T-cell (primary cell): ENCODE measurements at regions of chr17 and their contacts with region 1.

Region 1: DNA sequence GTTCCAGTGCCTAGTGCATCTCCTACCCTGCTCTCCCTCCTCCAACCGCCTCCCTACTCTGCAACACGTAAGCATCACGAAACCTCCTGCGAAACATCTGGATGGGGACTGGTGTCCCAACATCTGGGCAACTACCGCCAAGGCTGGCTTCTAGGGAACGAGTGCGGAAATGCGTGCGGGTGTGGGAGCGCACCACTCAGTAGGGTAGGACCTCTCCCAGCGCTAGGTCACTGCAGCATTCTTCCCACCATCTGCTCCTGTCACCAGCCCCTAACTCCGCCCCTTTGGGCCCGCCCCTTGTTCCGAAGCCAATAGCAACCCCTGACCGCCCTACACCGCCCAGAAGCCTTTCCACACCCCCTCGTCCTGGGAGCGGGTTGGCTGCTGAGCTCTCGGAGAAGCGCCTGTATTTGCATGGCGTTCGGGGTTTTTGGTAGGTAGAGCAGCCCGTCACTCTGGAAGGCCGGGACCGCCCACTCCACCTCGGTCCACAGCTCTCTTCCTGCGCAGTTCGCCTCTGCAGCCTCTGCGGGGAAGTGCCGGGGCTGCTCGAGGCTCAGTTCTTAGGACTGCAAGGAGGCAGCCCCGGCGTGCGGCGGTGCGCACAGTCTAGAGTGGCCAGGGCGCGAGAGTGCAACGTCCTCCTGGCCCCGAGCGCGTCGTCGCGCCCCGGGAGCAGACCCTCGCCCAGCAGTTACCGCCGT is at the start of gene HS3ST3B1:
- DNase-seq: peak; percentile 96 to 100 (median 99)
- ATAC-seq: peak; percentile 80 to 85 (median 82)
- H3K4me3 ChIP-seq: peak within 1 kb of the TSS; percentile 93 to 94
- H3K4me3 Mint-ChIP-seq: peak within 1 kb of the TSS; percentile 92 to 98 (median 95)
- H3K27ac ChIP-seq: peak within 1 kb of the TSS; percentile 56
- H3K27ac Mint-ChIP-seq: peak within 1 kb of the TSS; percentile 94 to 97
- H3K4me1 ChIP-seq: peaks cover 25 to 74% of the 10 kb centered on the region in 2 experiments
- H3K4me1 Mint-ChIP-seq: peaks cover 60 to 67% (median 66%) of the 10 kb centered on the region in 3 donors
- H3K27me3 ChIP-seq: peaks cover 9 to 39% of the 10 kb centered on the region in 2 experiments
- H3K27me3 Mint-ChIP-seq: peaks cover 21 to 42% of the 10 kb centered on the region in 2 donors
- total RNA-seq, gene HS3ST3B1: 12.9 to 35.1 (median 25.1) TPM

Region 2: DNA sequence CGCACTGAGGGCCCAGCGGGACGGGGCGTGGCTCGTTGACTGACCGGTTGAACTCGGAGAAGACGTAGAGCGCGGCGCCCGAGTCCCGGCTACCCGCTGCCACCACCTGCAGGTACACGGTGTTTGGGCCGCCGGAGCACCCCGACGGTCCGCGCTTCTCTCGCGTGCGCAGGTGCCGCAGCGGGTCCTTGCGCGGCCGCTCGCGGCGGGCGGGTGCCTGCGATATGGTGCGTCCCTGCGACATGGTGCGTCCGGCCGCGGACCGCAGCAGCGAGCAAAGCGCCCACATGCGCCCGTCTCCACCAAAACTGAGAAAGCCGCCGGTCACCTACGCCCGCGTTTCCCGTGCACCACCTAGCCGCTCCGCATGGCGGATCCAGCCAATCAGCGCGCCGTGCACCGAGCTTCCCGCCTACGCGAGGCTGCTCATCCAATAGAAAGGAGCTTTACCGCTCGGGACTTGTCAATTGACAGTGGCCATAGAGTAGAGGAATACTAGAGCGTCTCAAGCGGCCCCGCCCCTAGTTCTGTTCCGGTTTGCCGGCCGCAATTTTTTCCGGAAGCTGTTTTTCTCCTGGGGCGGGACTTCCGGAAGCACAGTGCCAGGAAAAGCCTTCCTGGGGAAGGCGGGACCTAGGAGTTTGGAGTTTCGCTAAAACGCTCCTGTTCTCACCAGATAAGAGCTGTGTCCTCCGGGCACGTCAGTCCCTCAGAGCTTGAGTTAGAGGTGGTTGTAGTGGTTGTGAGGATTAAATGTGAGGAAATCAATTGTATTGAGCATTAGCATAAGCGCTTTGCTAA is 1282.9 kb before region 1 on chr17 and contains the start of gene ELAC2:
- CTCF ChIA-PET with region 1: interaction called in 1 of 2 experiments, 12 read pairs
- POLR2A ChIA-PET with region 1: no interaction called
- DNase-seq: peak; percentile 88 to 97 (median 93)
- ATAC-seq: peak; percentile 99 to 100 (median 100)
- H3K4me3 ChIP-seq: peak within 1 kb of the TSS; percentile 88 to 94
- H3K4me3 Mint-ChIP-seq: peak within 1 kb of the TSS; percentile 95 to 97 (median 97)
- H3K27ac ChIP-seq: peak within 1 kb of the TSS; percentile 63
- H3K27ac Mint-ChIP-seq: peak within 1 kb of the TSS; percentile 96 to 97
- H3K4me1 ChIP-seq: peaks cover 5 to 23% of the 10 kb centered on the region in 2 experiments
- H3K4me1 Mint-ChIP-seq: peaks cover 30 to 40% (median 38%) of the 10 kb centered on the region in 3 donors
- H3K27me3 ChIP-seq: no peaks in the 10 kb centered on the region
- H3K27me3 Mint-ChIP-seq: no peaks in the 10 kb centered on the region
- total RNA-seq, gene ELAC2: 62.5 to 71.6 (median 66.4) TPM

Region 3: DNA sequence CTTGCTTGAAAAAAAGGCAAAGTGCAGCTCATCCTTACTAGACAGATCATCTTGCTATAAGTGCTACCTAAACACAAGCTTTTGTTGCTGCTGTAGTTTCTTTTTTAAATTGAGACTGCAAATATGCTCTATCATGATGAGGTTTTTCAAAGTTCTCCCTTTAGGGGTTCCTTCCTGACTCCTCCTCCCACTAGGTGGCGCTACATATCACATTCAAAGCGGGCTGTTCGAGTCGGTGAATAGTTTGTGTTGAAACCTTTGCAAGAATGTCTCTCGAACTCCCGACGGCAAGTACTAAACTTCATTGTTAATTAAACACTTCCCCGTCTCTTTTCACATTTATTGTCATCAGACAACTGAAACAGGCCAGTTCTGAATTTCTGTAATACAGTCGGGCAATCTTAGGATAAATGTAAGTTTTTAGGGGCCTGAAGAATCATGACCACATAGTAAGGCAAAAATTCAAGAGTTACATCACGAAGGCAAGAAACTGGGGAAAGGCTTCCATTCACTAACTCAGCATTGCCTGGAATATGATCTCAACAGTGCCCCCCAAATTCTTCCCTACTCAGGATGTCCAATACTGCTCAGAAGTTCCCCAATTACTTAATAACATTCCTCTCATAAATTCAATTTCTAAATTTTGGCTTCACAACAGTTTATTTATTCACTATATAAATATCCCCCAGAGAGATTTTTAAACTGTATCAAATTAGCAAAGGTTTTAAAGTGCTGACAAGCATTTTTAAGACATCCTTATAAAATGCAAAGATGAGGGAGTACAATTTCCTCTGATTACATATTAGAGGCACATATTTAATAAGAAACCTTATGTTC is 705.7 kb before region 1 on chr17:
- CTCF ChIA-PET with region 1: interaction called, 4 to 34 read pairs
- POLR2A ChIA-PET with region 1: no interaction called
- DNase-seq: peak; percentile 40 to 89 (median 77)
- ATAC-seq: peak; percentile 72 to 81 (median 78)
- H3K4me3 ChIP-seq: no peak overlapping the region
- H3K4me3 Mint-ChIP-seq: no peak overlapping the region
- H3K27ac ChIP-seq: no peak overlapping the region
- H3K27ac Mint-ChIP-seq: peak overlapping the region in 1 of 2 donors; percentile 29
- H3K4me1 ChIP-seq: no peaks in the 10 kb centered on the region
- H3K4me1 Mint-ChIP-seq: peaks cover 5 to 7% (median 6%) of the 10 kb centered on the region in 3 donors
- H3K27me3 ChIP-seq: peaks cover 5 to 10% of the 10 kb centered on the region in 2 experiments
- H3K27me3 Mint-ChIP-seq: peaks cover 31 to 32% of the 10 kb centered on the region in 2 donors

Region 4: DNA sequence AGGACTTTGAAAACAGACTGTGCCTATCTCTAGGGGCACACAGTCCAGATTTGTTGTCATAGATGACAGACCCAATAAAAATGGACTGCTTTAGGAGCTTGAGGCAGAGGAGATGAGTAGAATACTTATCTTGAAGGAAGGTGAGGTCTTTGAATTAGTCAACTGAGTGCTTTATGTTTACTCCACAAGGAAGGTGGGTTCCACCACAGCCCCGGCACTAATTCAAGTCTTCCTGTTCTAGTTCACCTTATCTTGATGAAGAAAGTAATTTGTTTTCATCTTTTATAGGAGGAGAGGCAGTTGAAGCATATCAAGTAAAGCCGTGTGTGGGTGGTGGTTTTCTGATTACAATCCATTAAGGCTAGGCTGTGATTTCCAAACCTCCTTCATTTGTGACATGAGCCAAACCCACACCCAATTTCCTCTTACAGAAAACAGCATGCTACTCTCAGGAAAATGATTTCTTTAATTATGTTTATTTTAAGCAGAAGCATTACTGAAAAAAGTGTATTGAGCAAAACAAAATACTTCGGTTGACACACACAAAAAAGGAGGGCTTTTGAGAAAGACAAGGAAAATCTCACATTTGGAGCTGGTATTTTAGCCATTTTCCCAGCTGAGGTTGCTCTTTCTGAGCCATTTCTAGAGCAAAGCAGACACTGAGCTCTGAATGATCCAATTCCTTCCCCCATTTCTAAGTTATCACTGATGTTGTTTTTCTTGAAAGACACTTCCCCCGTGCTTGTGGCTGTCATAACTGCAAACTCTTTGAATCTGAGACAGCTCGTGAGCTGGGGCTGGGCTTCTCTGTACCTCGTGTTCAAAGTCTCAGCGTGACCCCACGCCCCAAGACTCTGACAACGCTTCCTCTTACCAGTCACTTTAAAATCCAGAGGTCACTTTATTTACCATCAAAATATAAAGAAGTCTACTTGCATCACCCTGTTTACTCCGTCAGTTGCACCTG is 99.4 kb before region 1 on chr17:
- CTCF ChIA-PET with region 1: interaction called, 3 to 10 read pairs
- POLR2A ChIA-PET with region 1: interaction called, 3 to 5 read pairs
- DNase-seq: peak; percentile 43 to 87 (median 71)
- ATAC-seq: peak; percentile 69 to 84 (median 72)
- H3K4me3 ChIP-seq: peak overlapping the region; percentile 10 to 35
- H3K4me3 Mint-ChIP-seq: peak overlapping the region; percentile 50 to 66 (median 58)
- H3K27ac ChIP-seq: peak overlapping the region; percentile 87
- H3K27ac Mint-ChIP-seq: peak overlapping the region; percentile 97
- H3K4me1 ChIP-seq: peaks cover 79 to 94% of the 10 kb centered on the region in 2 experiments
- H3K4me1 Mint-ChIP-seq: peaks cover 98 to 100% (median 99%) of the 10 kb centered on the region in 3 donors
- H3K27me3 ChIP-seq: no peaks in the 10 kb centered on the region
- H3K27me3 Mint-ChIP-seq: no peaks in the 10 kb centered on the region

Region 5: DNA sequence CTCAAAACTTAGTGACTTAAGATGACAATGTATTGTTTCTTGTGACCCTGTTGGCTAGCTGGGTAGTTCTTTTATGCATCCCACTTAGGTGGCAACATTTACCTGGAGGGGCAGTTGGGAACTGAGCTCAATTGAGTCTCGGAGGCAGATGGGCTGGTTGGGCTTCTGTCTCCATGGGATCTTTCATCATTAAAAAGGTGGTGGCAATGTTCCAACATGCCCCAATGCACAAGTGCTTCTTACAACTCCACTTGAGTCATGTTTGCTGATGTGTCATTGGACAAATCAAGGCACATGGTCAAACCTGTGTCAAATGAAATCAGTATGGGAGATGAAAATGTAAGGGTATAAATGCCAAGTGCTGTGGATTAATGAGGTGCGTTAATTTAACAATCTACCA is 11.6 kb before region 1 on chr17:
- CTCF ChIA-PET with region 1: interaction called in 1 of 2 experiments, 4 read pairs
- POLR2A ChIA-PET with region 1: interaction called in 1 of 2 experiments, 11 read pairs
- DNase-seq: no peak
- ATAC-seq: no peak
- H3K4me3 ChIP-seq: no peak overlapping the region
- H3K4me3 Mint-ChIP-seq: no peak overlapping the region
- H3K27ac ChIP-seq: no peak overlapping the region
- H3K27ac Mint-ChIP-seq: no peak overlapping the region
- H3K4me1 ChIP-seq: no peaks in the 10 kb centered on the region
- H3K4me1 Mint-ChIP-seq: no peaks in the 10 kb centered on the region
- H3K27me3 ChIP-seq: peaks cover 0 to 10% of the 10 kb centered on the region in 2 experiments
- H3K27me3 Mint-ChIP-seq: peaks cover 35 to 36% of the 10 kb centered on the region in 2 donors

Region 6: GRCh38 chr17:14376666-14377065 is 75.9 kb after region 1 on chr17:
- CTCF ChIA-PET with region 1: no interaction called
- POLR2A ChIA-PET with region 1: no interaction called
- DNase-seq: no peak
- ATAC-seq: no peak
- H3K4me3 ChIP-seq: no peak overlapping the region
- H3K4me3 Mint-ChIP-seq: no peak overlapping the region
- H3K27ac ChIP-seq: no peak overlapping the region
- H3K27ac Mint-ChIP-seq: no peak overlapping the region
- H3K4me1 ChIP-seq: no peaks in the 10 kb centered on the region
- H3K4me1 Mint-ChIP-seq: peaks cover 2 to 14% (median 5%) of the 10 kb centered on the region in 3 donors
- H3K27me3 ChIP-seq: no peaks in the 10 kb centered on the region
- H3K27me3 Mint-ChIP-seq: no peaks in the 10 kb centered on the region

Region 7: GRCh38 chr17:14438551-14438950 is 137.8 kb after region 1 on chr17:
- CTCF ChIA-PET with region 1: no interaction called
- POLR2A ChIA-PET with region 1: no interaction called
- DNase-seq: no peak
- ATAC-seq: no peak
- H3K4me3 ChIP-seq: no peak overlapping the region
- H3K4me3 Mint-ChIP-seq: no peak overlapping the region
- H3K27ac ChIP-seq: no peak overlapping the region
- H3K27ac Mint-ChIP-seq: no peak overlapping the region
- H3K4me1 ChIP-seq: no peaks in the 10 kb centered on the region
- H3K4me1 Mint-ChIP-seq: peaks cover 6 to 36% (median 23%) of the 10 kb centered on the region in 3 donors
- H3K27me3 ChIP-seq: no peaks in the 10 kb centered on the region
- H3K27me3 Mint-ChIP-seq: no peaks in the 10 kb centered on the region